Cardiac septum (tissue), 1 donor: ENCODE measurements at regions of chr5 and their contacts with region 1.

Region 1: DNA sequence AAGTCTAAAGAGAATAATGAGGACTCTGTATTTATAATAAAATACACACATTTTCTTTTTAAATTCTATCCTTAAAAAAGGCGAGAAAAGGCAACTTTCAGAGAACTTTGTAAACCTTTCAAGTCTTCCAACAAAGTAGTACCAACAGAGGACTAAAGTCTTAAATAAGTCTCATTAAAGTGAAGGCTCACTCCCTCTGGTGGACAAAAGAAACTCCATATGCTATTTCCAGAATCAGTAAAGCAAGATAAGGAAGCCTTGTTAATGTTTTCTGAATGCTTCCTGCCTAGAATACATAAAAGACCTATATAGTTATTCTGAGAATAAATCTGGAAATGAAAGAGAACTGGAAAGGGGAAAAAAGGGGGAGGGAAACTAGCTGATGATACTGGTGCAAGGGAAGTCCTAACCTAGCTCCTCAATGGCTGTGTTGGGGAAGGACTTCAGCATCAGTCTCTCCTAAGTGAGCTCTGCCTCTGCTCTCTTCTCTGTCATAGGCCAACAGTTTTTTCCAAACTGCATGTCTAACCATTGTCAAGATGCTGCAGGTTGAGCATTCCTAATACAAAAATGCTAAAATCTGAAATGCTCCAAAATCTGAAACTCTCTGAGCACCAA is 7.2 kb downstream of the HMGCS1 start:
- DNase-seq: no peak

Region 2: GRCh38 chr5:42908509-42909488 is 397.3 kb before region 1 on chr5:
- intact Hi-C with region 1: loop called (anchors 5 kb)
- DNase-seq: peak; percentile 95

Region 3: DNA sequence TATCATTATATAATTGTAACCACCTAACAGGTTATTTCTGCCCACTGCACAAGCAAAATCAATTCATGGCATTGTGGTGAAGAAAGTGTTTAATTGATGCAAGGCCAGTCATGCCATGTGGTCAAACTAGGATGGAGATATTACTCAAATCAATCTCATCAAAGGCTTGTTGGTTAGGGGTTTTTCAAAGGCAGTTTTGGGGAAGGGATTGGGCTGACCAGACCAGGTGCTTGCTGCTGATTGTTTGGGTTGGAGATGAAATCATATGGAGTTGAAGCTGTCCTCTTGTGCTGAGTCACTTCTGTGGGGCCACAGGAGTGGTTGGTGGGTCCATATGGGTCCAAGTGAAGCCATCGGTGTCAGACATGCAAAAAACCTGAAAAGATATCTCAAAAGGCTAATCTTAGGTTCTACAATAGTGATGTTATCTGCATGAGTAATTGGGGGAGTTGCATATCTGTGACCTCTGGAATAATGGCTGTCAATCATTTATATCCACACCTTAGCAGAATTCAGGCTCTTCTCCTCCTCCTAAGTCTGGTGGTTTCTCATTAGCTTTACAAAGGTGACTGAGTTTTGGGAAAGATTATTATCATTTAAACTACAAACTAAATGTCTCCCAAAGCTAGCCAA is 37.8 kb before region 1 on chr5:
- intact Hi-C with region 1: no loop called
- DNase-seq: no peak

Region 4: DNA sequence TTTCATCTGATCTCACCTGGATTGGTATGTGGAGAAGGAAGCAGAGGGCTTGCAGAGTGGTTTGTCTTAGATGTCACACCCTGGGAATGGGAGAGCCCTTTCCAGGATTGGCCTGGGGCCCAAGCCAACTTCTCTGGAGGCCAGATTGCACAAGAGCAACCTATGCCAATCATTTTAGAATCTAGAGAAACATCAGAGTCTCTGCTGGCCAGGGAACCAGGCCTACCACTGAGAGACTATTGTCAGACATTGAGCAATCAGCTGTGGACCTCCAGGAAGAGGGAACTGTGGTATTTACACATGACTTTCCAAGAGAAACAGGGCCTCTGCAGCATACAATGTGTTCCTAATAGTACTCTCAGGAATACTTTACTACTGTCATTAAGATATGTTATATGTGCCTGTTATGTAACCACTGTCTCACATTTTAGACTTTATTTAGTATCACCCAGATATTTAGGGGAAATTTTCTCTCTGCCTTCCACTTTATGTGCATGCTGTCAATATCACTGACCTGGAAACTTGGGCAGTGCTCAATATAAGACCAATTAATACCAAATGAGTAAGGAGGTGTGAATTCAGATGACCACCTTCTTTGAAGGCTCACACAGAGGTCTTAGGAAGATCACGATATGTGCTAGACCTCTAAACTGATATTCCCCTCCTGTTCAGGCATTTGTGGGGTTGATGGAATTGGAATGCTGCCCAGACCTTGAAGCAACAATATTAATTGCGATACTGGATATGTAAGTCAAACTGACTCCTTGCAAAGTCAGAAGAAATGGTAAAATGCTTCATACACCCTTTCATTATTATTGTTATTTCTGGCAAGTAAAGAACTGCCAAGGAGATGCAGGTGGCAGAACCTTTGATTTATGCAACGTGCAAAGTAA is 126.7 kb after region 1 on chr5:
- intact Hi-C with region 1: no loop called
- DNase-seq: no peak